ENCODE measurements at regions of chr6 and their contacts with region 1.

Region 1: GRCh38 chr6:101509536-101509935 is 116.0 kb downstream of the GRIK2 start:
- DNase-seq: no peak
- ATAC-seq: no peak
- H3K4me3 ChIP-seq: no peak overlapping the region
- H3K27ac ChIP-seq: no peak overlapping the region
- H3K4me1 ChIP-seq: no peaks in the 10 kb centered on the region
- H3K27me3 ChIP-seq: no peaks in the 10 kb centered on the region
- CTCF ChIP-seq: no peak
- EP300 ChIP-seq: no peak
- POLR2A ChIP-seq: no peak
- RAD21 ChIP-seq: no peak

Region 2: DNA sequence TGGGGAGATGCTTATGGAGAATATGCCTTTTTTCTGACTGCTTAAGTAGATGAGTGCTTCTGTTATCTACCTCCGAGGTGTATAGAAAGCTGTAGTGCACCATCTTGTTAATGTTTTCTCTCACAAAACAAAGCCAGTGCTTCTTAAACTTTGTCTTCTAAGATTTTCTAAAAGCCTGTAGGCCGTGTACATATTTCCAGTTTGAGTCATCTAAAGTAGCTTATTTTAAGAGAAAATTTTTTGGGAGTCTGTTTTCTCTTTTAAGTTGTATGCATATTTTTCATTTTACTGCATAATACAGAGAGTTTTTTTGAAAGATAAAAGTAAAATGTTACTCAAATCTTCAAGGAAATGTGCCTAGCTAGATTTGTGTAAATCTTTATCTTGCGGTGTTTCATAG is 35.7 kb after region 1 on chr6:
- CTCF ChIA-PET with region 1: no interaction called
- POLR2A ChIA-PET with region 1: no interaction called
- in situ Hi-C with region 1: loop called (anchors 5 kb)
- intact Hi-C with region 1: no loop called
- DNase-seq: no peak
- ATAC-seq: no peak
- H3K4me3 ChIP-seq: no peak overlapping the region
- H3K27ac ChIP-seq: no peak overlapping the region
- H3K4me1 ChIP-seq: no peaks in the 10 kb centered on the region
- H3K27me3 ChIP-seq: no peaks in the 10 kb centered on the region
- CTCF ChIP-seq: no peak
- EP300 ChIP-seq: no peak
- POLR2A ChIP-seq: no peak
- RAD21 ChIP-seq: no peak

Measured in K562 (cell line).